ENCODE measurements at regions of chr9 and their contacts with region 1.

Region 1: DNA sequence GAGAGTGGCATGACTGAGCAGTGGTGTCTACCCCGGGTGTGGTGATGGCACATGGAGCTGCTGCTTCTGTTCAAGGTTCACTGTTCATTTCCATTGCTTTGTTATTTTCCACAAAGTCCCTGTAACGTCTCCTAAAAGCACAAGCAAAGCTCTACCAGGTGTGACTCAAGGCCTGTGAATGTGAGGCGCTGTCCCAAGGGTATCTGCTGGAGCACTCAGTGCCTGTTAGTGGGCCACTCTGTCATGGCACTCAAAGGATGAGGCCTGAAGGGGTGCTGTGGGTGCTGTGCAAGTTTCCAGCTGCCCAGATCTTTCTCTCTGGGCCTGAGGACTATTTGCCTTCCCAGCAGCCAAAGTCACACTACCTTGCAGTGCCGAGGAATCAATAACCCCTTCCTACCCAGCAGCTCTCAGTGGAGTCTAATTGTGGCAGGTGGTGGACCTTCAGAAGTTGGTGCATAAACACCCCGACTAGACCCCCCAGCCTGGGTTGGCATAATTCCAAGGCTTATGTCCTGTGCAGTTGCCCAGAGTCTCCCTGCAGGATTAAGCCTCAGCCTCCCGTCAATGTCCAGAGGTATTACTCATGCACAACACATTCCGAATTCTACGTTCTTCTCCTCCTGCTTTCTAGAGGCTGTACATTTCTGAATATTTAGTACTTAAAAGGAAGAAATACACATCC is 17.4 kb upstream of the PTCH1 start:
- DNase-seq: no peak

Region 2: DNA sequence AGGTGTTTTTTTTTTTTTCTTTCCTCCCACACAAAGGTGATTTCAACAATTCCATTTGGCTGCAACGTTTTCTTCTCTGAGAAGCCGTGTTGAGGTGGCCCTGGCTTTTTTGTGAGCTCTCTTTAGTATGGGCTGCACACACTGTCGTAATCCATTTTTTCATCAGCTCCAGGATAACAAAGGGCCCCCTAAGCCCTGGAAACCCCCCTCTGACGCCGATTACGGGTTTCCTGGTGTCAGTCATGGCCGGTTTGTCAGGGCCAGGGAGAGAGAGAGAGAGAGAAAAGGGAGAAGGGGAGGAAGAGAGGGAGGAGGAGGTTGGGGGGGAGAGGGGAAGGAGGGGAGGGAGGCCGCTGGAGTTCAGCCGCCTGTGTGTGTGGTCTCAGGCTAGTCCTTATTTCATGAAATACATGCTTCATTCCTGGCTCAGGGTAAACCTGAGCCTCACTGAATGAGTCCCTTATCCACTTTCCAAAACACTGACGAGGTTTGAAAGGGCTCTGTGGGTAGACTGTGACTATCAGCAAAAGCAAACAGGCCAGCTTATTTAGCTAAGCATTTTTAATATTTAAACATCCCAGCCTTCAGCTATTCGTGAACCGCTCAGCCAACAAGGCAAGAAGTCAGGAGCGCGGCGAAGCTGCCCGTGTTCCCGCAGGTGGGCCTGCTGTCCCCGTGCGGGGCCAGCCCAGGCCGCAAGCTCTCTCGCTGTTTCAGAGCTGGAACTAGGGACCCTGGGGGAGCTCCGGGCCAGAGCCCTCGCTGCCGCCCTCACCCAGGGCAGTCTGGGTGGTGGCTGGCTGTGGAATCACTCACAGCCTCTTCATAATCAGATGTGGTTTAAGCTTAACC is 514.2 kb after region 1 on chr9:
- intact Hi-C with region 1: no loop called
- DNase-seq: peak; percentile 76

Region 3: GRCh38 chr9:96149533-96150280 is 615.6 kb after region 1 on chr9:
- intact Hi-C with region 1: loop called in 1 of 2 experiments (anchors 2 kb)
- DNase-seq: no peak

Measured in posterior vena cava (tissue), 2 donors.